Calu3 (cell line): ENCODE measurements at regions of chr19 and their contacts with region 1.

Region 1: DNA sequence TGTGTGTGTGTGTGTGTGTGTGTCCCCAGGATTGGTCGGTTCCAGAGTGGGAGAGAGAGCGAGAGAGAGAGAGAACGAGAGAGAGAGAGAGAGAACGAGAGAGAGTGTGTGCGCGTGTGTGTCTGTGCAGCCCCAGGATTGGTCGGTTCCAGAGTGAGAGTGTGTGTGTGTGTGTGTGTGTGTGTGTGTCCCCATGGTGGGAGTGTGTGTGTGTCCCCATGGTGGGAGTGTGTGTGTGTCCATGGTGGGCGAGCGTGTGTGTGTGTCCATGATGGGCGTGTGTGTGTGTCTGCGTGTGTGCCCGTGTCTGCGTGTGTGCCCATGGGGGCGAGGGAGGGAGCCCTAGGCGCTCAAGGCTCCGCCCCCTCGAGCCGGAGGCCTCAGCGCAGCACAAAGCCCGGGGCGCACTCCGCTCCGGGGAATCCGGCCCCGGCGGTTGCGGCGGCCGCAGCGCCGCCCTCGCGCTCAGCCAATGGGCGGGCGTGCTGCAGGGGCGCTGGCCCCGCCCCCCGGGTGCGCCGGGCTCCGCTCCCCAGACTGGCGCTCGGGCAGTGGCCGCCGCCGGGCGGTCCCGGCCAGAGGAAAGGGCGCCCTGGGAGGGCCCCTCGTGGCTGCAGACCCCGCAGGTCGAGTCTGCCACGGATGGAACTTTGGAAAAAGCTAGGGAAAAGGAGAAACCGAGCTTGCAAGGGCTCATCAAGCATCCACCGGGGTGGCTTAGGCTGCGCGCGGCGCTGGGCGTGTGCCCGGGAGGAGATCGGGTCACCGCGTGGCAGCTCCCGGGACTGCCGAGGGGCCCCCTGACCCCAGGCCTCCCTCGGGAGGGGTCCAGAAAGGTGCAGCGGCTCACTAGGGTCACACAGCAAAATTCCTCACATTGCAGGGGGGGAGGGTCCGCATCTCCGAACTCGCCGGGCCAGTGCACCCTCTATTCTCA is 96.2 kb downstream of the INSR start:
- DNase-seq: peak; percentile 90
- H3K4me3 Mint-ChIP-seq: peak overlapping the region; percentile 83
- H3K27ac Mint-ChIP-seq: peak overlapping the region; percentile 80
- H3K4me1 Mint-ChIP-seq: peaks cover 25% of the 10 kb centered on the region
- H3K27me3 Mint-ChIP-seq: peaks cover 13% of the 10 kb centered on the region
- CTCF ChIP-seq: no peak

Region 2: GRCh38 chr19:7078008-7078407 is 120.0 kb before region 1 on chr19:
- CTCF ChIA-PET with region 1: no interaction called
- intact Hi-C with region 1: no loop called
- DNase-seq: no peak
- H3K4me3 Mint-ChIP-seq: no peak overlapping the region
- H3K27ac Mint-ChIP-seq: no peak overlapping the region
- H3K4me1 Mint-ChIP-seq: no peaks in the 10 kb centered on the region
- H3K27me3 Mint-ChIP-seq: no peaks in the 10 kb centered on the region
- CTCF ChIP-seq: no peak

Region 3: GRCh38 chr19:7145494-7146485 is 52.2 kb before region 1 on chr19:
- CTCF ChIA-PET with region 1: no interaction called
- intact Hi-C with region 1: no loop called
- DNase-seq: no peak
- H3K4me3 Mint-ChIP-seq: no peak overlapping the region
- H3K27ac Mint-ChIP-seq: no peak overlapping the region
- H3K4me1 Mint-ChIP-seq: no peaks in the 10 kb centered on the region
- H3K27me3 Mint-ChIP-seq: no peaks in the 10 kb centered on the region
- CTCF ChIP-seq: no peak

Region 4: GRCh38 chr19:7159105-7159933 is 38.7 kb before region 1 on chr19:
- CTCF ChIA-PET with region 1: no interaction called
- intact Hi-C with region 1: no loop called
- DNase-seq: no peak
- H3K4me3 Mint-ChIP-seq: no peak overlapping the region
- H3K27ac Mint-ChIP-seq: no peak overlapping the region
- H3K4me1 Mint-ChIP-seq: no peaks in the 10 kb centered on the region
- H3K27me3 Mint-ChIP-seq: no peaks in the 10 kb centered on the region
- CTCF ChIP-seq: no peak

Region 5: GRCh38 chr19:7294571-7295212 is 96.7 kb after region 1 on chr19:
- CTCF ChIA-PET with region 1: no interaction called
- intact Hi-C with region 1: loop called (anchors 5 kb)
- DNase-seq: peak; percentile 53
- H3K4me3 Mint-ChIP-seq: peak overlapping the region; percentile 76
- H3K27ac Mint-ChIP-seq: no peak overlapping the region
- H3K4me1 Mint-ChIP-seq: no peaks in the 10 kb centered on the region
- H3K27me3 Mint-ChIP-seq: peaks cover 24% of the 10 kb centered on the region
- CTCF ChIP-seq: peak; percentile 28

Region 6: DNA sequence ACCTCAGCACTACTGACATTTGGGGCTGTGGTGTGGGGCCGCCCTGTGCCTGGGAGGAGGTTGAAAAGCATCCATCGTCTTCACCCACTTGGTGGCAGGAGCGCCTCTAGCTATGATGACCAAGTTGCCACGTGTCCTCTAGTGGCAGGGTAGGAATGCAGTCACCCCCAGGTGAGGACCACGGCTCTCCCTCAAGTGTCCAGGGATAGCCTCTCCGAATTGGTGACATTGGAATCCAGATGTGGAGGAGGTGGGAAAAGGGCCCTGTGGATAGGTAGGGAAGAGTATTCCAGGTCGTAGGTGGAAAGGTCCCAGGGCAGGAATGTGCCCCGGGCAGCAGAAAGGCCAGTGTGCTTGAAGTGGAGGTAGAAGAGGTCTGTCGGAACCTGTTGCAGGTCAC is 188.3 kb after region 1 on chr19:
- CTCF ChIA-PET with region 1: no interaction called
- intact Hi-C with region 1: no loop called
- DNase-seq: no peak
- H3K4me3 Mint-ChIP-seq: no peak overlapping the region
- H3K27ac Mint-ChIP-seq: no peak overlapping the region
- H3K4me1 Mint-ChIP-seq: peaks cover 6% of the 10 kb centered on the region
- H3K27me3 Mint-ChIP-seq: no peaks in the 10 kb centered on the region
- CTCF ChIP-seq: no peak